Left ventricle myocardium superior (tissue), 1 donor: ENCODE measurements at regions of chr6 and their contacts with region 1.

Region 1: GRCh38 chr6:80456724-80457438 is 350.4 kb downstream of the BCKDHB start:
- DNase-seq: no peak
- ATAC-seq: no peak

Region 2: DNA sequence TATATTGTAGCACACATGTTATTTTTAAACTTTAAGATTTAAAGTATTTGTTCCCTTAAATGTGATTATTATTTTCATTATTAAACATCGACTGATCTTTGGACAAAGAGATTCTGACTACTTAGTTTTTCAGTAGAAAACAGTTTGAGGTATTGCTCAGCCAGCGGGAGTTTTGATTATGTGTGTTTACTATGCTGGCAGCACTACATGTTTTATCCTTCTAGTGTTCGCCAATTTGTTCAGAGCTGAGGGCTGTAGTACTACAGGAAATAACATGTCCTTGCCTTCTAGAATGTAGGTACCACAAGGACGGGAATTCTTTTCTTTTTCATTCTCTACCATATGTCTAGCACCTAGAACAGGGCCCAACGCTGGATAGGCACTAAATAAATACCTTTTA is 908.6 kb before region 1 on chr6:
- intact Hi-C with region 1: no loop called
- DNase-seq: no peak
- ATAC-seq: no peak

Region 3: GRCh38 chr6:80425089-80425823 is 31.6 kb before region 1 on chr6:
- intact Hi-C with region 1: loop called (anchors 1 kb)
- DNase-seq: no peak
- ATAC-seq: no peak

Region 4: GRCh38 chr6:80527552-80528052 is 70.7 kb after region 1 on chr6:
- intact Hi-C with region 1: no loop called
- DNase-seq: no peak
- ATAC-seq: no peak